ENCODE measurements at regions of chr3 and their contacts with region 1.

Region 1: GRCh38 chr3:195271116-195271858 is at the start of gene XXYLT1:
- DNase-seq: peak; percentile 93
- ATAC-seq: peak; percentile 85
- H3K4me3 Mint-ChIP-seq: peak within 1 kb of the TSS; percentile 85
- H3K27ac Mint-ChIP-seq: peak within 1 kb of the TSS; percentile 87
- H3K4me1 Mint-ChIP-seq: peaks cover 16% of the 10 kb centered on the region
- H3K27me3 Mint-ChIP-seq: no peaks in the 10 kb centered on the region
- CTCF ChIP-seq: peak; percentile 88
- total RNA-seq, gene XXYLT1: 8.4 to 9.6 TPM

Region 2: DNA sequence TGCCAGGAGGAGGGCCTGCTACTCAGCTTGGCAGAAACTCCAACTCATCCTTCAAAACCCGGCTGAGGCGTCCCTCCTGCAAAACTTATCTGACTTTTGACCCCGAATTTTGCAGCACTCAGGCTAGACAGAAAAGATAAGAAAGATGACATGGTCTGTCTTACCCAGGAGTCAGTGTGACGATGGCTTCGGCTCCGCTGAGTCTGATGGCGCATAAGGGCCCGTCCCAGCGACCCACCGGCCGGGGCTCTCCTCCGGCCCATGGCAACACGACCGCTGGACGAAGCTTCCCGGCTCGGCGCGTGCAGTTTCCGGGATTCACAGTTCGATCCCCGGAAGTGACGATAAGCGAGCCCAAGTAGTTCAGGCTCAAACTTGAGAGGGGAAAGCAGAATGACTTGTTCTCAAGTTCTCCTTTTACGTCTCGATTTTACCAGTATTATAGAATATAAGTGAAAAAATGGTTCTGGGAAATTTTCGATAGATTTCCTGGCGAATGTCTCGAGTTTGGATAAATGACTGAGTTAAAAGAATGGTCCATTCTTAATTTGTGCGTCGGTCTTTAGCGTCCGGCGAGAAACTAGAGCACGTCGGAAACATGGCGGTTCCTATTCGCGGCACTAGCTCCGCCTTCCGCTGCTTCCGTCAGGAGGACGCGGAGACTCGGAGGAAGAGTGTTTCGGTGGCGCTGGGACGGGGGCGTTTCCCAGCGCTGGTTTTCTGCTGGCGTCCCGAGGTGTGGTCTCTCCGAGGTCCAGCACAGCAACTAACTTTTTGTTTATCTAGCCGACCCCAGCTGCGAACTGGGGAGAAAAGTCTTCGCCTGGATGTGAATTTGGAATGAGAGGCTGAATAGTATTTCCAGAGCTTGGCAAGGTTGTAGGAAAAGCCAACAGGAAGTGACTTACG is 599.1 kb before region 1 on chr3 and contains the start of gene LSG1:
- CTCF ChIA-PET with region 1: interaction called, 26 read pairs
- POLR2A ChIA-PET with region 1: interaction called, 4 read pairs
- intact Hi-C with region 1: no loop called
- DNase-seq: peak; percentile 94
- ATAC-seq: peak; percentile 88
- H3K4me3 Mint-ChIP-seq: peak within 1 kb of the TSS; percentile 94
- H3K27ac Mint-ChIP-seq: peak within 1 kb of the TSS; percentile 98
- H3K4me1 Mint-ChIP-seq: peaks cover 59% of the 10 kb centered on the region
- H3K27me3 Mint-ChIP-seq: peaks cover 2% of the 10 kb centered on the region
- CTCF ChIP-seq: no peak
- total RNA-seq, gene LSG1: 36.5 to 41.3 TPM

Region 3: GRCh38 chr3:195259475-195260279 is 11.6 kb before region 1 on chr3:
- CTCF ChIA-PET with region 1: interaction called, 51 read pairs
- POLR2A ChIA-PET with region 1: interaction called, 14 read pairs
- intact Hi-C with region 1: no loop called
- DNase-seq: peak; percentile 96
- ATAC-seq: peak; percentile 91
- H3K4me3 Mint-ChIP-seq: peak overlapping the region; percentile 57
- H3K27ac Mint-ChIP-seq: peak overlapping the region; percentile 83
- H3K4me1 Mint-ChIP-seq: peaks cover 31% of the 10 kb centered on the region
- H3K27me3 Mint-ChIP-seq: no peaks in the 10 kb centered on the region
- CTCF ChIP-seq: peak; percentile 76

Region 4: DNA sequence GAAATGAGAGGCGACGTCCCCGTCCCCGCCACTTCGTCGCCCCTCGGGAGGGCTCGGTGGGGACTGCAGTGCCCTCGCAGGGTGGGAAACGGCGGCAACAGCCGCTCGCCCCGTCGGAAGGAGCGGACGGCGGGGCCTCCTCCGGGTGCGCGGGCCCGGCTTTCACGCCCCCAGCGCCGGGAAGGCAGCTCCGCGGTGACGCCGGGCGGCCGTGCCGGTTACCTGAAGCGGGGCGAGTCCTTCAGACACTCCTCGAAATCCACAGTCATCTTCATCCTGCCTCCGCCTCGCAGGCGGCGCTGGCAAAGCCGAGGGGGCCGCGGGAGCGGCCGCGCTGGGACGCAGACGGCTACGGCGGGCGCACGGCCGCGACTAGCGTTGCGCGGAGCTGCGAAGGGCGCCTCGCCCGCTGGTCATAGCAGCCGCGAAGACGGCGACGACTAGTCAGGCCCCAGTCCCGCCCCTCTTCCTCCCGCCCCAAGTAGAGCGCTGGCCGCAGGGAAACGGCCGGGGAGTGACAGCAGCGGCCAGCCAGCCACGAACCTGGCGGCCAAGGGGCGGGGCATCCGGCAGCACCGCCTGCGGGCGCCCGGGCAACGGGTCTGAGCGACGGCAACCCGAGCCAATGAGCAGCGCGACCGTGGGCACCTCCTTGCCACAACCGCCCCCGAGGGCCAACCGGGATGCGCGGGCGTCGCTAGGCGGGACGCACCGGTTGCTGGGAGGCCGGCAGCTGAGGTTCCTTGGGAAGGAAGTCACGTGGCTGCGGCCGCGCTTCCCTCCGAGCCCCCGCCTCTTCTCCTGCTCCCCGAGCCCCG is 171.5 kb after region 1 on chr3 and contains the start of gene ACAP2:
- CTCF ChIA-PET with region 1: interaction called, 60 read pairs
- POLR2A ChIA-PET with region 1: interaction called, 4 read pairs
- intact Hi-C with region 1: loop called (anchors 5 kb)
- DNase-seq: peak; percentile 98
- ATAC-seq: peak; percentile 94
- H3K4me3 Mint-ChIP-seq: peak within 1 kb of the TSS; percentile 96
- H3K27ac Mint-ChIP-seq: peak within 1 kb of the TSS; percentile 91
- H3K4me1 Mint-ChIP-seq: peaks cover 47% of the 10 kb centered on the region
- H3K27me3 Mint-ChIP-seq: no peaks in the 10 kb centered on the region
- CTCF ChIP-seq: no peak
- total RNA-seq, gene ACAP2: 54.6 to 55.7 TPM

Region 5: GRCh38 chr3:195517030-195517429 is 245.7 kb after region 1 on chr3:
- CTCF ChIA-PET with region 1: interaction called, 256 read pairs
- POLR2A ChIA-PET with region 1: interaction called, 16 read pairs
- intact Hi-C with region 1: loop called (anchors 2 kb)
- DNase-seq: no peak
- ATAC-seq: no peak
- H3K4me3 Mint-ChIP-seq: no peak overlapping the region
- H3K27ac Mint-ChIP-seq: peak overlapping the region; percentile 50
- H3K4me1 Mint-ChIP-seq: peaks cover 27% of the 10 kb centered on the region
- H3K27me3 Mint-ChIP-seq: no peaks in the 10 kb centered on the region
- CTCF ChIP-seq: no peak

Region 6: GRCh38 chr3:195542698-195543499 is 271.6 kb after region 1 on chr3 and contains the start of gene PPP1R2:
- CTCF ChIA-PET with region 1: interaction called, 32 read pairs
- POLR2A ChIA-PET with region 1: interaction called, 3 read pairs
- intact Hi-C with region 1: no loop called
- DNase-seq: peak; percentile 94
- ATAC-seq: peak; percentile 87
- H3K4me3 Mint-ChIP-seq: peak within 1 kb of the TSS; percentile 83
- H3K27ac Mint-ChIP-seq: peak within 1 kb of the TSS; percentile 89
- H3K4me1 Mint-ChIP-seq: peaks cover 57% of the 10 kb centered on the region
- H3K27me3 Mint-ChIP-seq: no peaks in the 10 kb centered on the region
- CTCF ChIP-seq: no peak
- total RNA-seq, gene PPP1R2: 86.7 to 89.0 TPM

Region 7: GRCh38 chr3:195556387-195556786 is 285.1 kb after region 1 on chr3:
- CTCF ChIA-PET with region 1: interaction called, 19 read pairs
- POLR2A ChIA-PET with region 1: no interaction called
- intact Hi-C with region 1: no loop called
- DNase-seq: peak; percentile 62
- ATAC-seq: peak; percentile 70
- H3K4me3 Mint-ChIP-seq: no peak overlapping the region
- H3K27ac Mint-ChIP-seq: no peak overlapping the region
- H3K4me1 Mint-ChIP-seq: peaks cover 43% of the 10 kb centered on the region
- H3K27me3 Mint-ChIP-seq: no peaks in the 10 kb centered on the region
- CTCF ChIP-seq: peak; percentile 45